BJ (cell line): ENCODE measurements at regions of chr1 and their contacts with region 1.

Region 1: DNA sequence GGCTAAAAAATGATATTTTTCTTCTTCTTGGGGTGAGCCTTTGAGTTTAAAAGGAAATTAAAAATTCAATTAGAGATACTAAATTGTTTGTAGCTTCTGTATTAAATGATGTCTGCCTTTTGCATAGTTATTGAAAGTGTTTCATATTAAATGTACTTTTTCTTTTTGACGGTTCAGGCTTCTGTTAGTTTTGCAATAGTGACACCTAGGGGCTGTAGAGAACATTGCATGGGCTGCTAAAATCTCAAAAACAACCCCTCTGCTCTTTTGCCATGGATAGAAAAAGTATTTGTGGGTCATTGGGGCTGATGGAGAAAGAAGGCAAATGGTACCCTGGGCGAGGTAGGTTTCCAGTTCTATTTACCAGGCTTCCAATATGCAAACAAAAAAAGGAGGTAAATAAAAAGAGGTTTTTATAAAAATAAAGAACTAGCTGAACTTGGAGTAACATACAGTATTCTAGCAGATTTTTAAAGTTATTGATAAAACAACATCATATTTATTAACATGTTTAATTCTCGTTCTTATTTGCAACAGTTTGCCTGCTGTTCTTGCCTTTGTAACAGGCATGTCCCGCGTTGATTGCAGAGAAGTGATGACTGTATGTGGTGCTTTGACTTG is 115.4 kb upstream of the HOOK1 start:
- DNase-seq: no peak
- H3K4me3 ChIP-seq: no peak overlapping the region
- H3K27me3 ChIP-seq: no peaks in the 10 kb centered on the region
- CTCF ChIP-seq: peak; percentile 90

Region 2: GRCh38 chr1:59675936-59676335 is 23.4 kb before region 1 on chr1:
- CTCF ChIA-PET with region 1: interaction called, 16 read pairs
- POLR2A ChIA-PET with region 1: no interaction called
- DNase-seq: no peak
- H3K4me3 ChIP-seq: no peak overlapping the region
- H3K27me3 ChIP-seq: no peaks in the 10 kb centered on the region
- CTCF ChIP-seq: no peak

Region 3: GRCh38 chr1:59730759-59731478 is 31.6 kb after region 1 on chr1:
- CTCF ChIA-PET with region 1: interaction called, 10 read pairs
- POLR2A ChIA-PET with region 1: no interaction called
- DNase-seq: peak; percentile 83
- H3K4me3 ChIP-seq: no peak overlapping the region
- H3K27me3 ChIP-seq: no peaks in the 10 kb centered on the region
- CTCF ChIP-seq: no peak

Region 4: DNA sequence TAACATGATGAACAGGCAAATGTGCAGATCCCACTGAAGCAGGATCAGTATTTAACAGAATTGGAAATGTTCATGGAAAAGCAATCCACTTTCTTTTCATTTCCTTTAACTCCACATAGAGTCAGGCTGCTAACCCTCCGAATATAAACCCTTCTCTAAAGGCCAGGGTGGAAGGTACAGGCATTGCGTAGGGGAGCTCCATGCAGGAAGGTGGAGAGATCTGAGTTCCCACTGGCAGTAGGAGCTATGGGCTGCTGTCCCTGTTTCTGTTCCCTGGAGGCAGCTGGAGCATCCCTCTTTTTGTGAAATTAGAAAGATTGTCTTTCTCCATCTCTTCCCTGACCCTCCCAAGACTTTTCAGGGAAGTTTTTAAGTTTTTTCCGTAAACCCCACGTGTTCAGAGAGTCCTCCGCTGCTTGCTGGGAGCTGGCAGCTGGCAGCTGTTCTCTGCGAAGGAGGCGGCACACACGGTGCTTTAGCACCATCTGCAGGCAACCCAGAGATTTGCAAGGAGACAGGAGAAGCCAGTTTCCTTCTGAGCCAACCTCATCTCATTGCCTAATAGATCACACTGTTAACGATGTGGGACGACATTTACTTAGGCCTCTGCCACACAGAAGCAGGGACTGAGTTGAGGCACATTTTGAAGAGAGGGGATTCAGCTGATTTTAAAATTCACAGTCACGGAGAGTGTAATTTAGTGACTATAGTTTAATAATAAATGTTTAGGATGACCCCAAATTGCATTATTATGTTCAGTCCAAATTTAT is 60.0 kb after region 1 on chr1:
- CTCF ChIA-PET with region 1: interaction called, 69 read pairs
- POLR2A ChIA-PET with region 1: no interaction called
- DNase-seq: no peak
- H3K4me3 ChIP-seq: no peak overlapping the region
- H3K27me3 ChIP-seq: no peaks in the 10 kb centered on the region
- CTCF ChIP-seq: peak; percentile 94